Activated CD8-positive, alpha-beta T cell treated with anti-CD3 and anti-CD28 coated beads for 36 hours (primary cell): ENCODE measurements at regions of chrX and their contacts with region 1.

Region 1: GRCh38 chrX:9464435-9465371 is at the start of gene TBL1X:
- DNase-seq: peak; percentile 57
- ATAC-seq: peak; percentile 43
- H3K4me3 Mint-ChIP-seq: peak within 1 kb of the TSS; percentile 76
- H3K27ac Mint-ChIP-seq: peak within 1 kb of the TSS; percentile 93
- H3K4me1 Mint-ChIP-seq: peaks cover 43% of the 10 kb centered on the region
- H3K27me3 Mint-ChIP-seq: no peaks in the 10 kb centered on the region
- CTCF ChIP-seq: no peak
- total RNA-seq, gene TBL1X: 28.9 to 32.0 TPM

Region 2: GRCh38 chrX:9285342-9285771 is 179.3 kb before region 1 on chrX:
- CTCF ChIA-PET with region 1: no interaction called
- POLR2A ChIA-PET with region 1: no interaction called
- intact Hi-C with region 1: loop called (anchors 10 kb)
- DNase-seq: peak; percentile 86
- ATAC-seq: peak; percentile 96
- H3K4me3 Mint-ChIP-seq: no peak overlapping the region
- H3K27ac Mint-ChIP-seq: peak overlapping the region; percentile 89
- H3K4me1 Mint-ChIP-seq: peaks cover 32% of the 10 kb centered on the region
- H3K27me3 Mint-ChIP-seq: no peaks in the 10 kb centered on the region
- CTCF ChIP-seq: no peak

Region 3: DNA sequence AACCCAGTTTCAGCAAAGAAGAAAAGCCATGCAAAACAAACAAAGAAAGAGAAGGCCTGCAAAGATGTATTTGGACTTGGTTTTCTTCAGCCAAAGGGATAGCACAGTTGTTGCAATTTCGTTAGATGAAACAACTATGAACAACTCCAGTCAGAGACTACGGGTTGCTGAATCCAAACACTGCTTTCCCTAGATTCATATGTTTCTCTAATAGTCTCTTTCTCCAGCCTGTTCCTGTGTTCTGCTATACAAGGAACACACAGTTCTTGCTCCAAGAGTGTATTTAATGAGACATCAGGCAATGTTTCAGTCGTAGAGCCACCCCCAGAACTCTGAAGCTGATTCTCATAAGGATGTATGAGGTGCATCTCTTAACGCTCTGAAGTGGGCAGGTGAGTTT is 162.3 kb before region 1 on chrX:
- CTCF ChIA-PET with region 1: no interaction called
- POLR2A ChIA-PET with region 1: no interaction called
- intact Hi-C with region 1: no loop called
- DNase-seq: no peak
- ATAC-seq: no peak
- H3K4me3 Mint-ChIP-seq: no peak overlapping the region
- H3K27ac Mint-ChIP-seq: no peak overlapping the region
- H3K4me1 Mint-ChIP-seq: no peaks in the 10 kb centered on the region
- H3K27me3 Mint-ChIP-seq: no peaks in the 10 kb centered on the region
- CTCF ChIP-seq: no peak

Region 4: DNA sequence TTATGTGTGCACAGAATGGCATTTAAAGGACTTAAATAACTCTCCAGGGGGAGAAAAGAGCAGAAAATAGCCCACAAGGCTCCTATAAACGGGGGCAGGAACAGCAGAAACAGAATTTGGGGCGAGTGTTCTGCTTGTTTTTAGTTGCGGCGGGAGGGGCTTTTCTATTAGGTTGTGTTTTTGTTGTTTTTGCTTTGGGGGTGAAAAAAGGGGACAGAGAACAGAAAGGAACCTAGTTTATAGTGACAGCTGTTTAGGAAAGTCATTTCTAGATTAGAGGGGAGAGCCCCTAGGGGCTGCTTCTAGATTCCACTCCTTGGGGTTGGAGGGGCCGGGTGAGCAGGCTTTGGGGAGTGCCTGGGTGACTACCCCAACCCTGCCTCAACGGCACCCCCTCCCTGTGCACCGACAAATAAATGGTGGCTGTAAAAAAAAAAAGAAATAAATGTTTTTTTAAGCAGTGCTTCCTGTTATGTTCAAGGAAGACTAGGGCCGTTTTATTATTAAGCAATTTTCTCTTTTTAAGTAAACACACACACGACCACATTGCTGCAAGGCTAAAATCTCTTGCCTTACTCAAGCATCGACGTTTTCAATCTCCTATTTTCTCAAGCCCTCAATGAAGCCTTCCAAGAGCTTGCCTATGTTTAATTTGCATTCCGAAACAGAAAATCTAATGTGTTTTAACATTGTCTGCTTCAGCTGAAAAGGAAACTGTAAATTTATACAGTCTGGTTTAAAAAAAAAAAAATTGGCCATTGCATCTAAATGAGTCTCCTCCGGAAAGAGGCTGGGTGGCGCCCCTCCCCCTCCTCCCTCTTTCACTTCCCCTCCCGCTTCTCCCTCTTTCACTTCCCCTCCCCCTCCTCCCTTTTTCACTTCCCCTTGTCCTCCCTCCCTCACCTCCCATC is 123.2 kb before region 1 on chrX:
- CTCF ChIA-PET with region 1: interaction called, 7 read pairs
- POLR2A ChIA-PET with region 1: interaction called, 10 read pairs
- intact Hi-C with region 1: loop called (anchors 2 kb)
- DNase-seq: peak; percentile 83
- ATAC-seq: peak; percentile 86
- H3K4me3 Mint-ChIP-seq: peak overlapping the region; percentile 67
- H3K27ac Mint-ChIP-seq: peak overlapping the region; percentile 84
- H3K4me1 Mint-ChIP-seq: peaks cover 30% of the 10 kb centered on the region
- H3K27me3 Mint-ChIP-seq: no peaks in the 10 kb centered on the region
- CTCF ChIP-seq: no peak

Region 5: GRCh38 chrX:9708904-9709553 is 244.3 kb after region 1 on chrX:
- CTCF ChIA-PET with region 1: no interaction called
- POLR2A ChIA-PET with region 1: no interaction called
- intact Hi-C with region 1: loop called (anchors 10 kb)
- DNase-seq: peak; percentile 81
- ATAC-seq: peak; percentile 75
- H3K4me3 Mint-ChIP-seq: no peak overlapping the region
- H3K27ac Mint-ChIP-seq: no peak overlapping the region
- H3K4me1 Mint-ChIP-seq: peaks cover 5% of the 10 kb centered on the region
- H3K27me3 Mint-ChIP-seq: no peaks in the 10 kb centered on the region
- CTCF ChIP-seq: peak; percentile 57

Region 6: GRCh38 chrX:9797384-9798355 is 333.0 kb after region 1 on chrX:
- CTCF ChIA-PET with region 1: no interaction called
- POLR2A ChIA-PET with region 1: no interaction called
- intact Hi-C with region 1: no loop called
- DNase-seq: no peak
- ATAC-seq: no peak
- H3K4me3 Mint-ChIP-seq: no peak overlapping the region
- H3K27ac Mint-ChIP-seq: no peak overlapping the region
- H3K4me1 Mint-ChIP-seq: no peaks in the 10 kb centered on the region
- H3K27me3 Mint-ChIP-seq: peaks cover 9% of the 10 kb centered on the region
- CTCF ChIP-seq: no peak